Naive thymus-derived CD8-positive, alpha-beta T cell (primary cell): ENCODE measurements at regions of chr17 and their contacts with region 1.

Region 1: DNA sequence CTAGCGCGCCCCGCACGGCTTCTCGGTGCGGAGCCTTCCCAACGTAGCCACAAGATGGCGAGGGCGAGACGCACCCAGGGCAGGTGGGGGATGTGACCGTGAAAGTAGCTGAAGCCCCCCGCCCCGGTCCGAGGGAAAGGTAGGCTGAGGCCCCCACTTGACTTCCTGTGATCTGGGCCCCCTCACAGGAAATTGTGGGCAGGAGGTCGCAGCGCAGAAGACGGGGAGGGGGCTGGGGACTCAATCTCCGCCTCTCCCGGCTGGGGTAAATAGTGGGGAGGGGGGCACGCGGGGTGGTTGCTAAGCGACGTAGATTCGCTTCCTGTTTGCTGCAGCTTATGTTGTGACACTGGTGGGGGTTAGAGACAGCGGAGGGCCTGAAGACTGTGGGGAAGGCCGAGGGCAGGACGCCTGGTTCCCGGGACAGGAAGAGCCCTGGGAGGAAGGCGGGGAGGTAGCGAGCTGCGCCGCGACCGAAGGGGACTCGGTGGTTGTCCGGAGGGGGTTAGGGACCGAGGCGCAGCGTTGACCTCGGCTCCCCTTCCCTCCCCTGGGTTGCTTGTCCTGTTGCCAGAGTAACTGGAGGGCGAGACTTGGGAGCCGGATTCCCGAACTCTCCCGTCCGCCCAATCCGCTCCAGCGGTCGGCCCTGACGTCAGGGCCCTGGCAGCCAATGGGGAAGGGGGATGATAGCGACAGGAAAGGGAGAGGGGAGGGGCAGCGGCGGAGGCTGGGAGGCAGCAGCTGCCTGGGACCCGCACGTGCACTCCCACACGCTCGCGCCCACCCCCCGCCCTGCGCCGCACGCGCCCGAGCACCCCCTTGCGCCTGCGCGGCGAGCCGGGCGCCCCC is 1.2 kb downstream of the KDM6B start:
- DNase-seq: peak; percentile 77 to 97 (median 95)
- ATAC-seq: peak; percentile 54 to 64
- H3K4me3 Mint-ChIP-seq: peak overlapping the region; percentile 96 to 99 (median 98)
- H3K27ac Mint-ChIP-seq: peak overlapping the region; percentile 95 to 100 (median 100)
- H3K4me1 Mint-ChIP-seq: peaks cover 44 to 55% (median 47%) of the 10 kb centered on the region in 4 donors
- H3K27me3 Mint-ChIP-seq: peaks cover 0 to 2% (median 0%) of the 10 kb centered on the region in 5 donors

Region 2: DNA sequence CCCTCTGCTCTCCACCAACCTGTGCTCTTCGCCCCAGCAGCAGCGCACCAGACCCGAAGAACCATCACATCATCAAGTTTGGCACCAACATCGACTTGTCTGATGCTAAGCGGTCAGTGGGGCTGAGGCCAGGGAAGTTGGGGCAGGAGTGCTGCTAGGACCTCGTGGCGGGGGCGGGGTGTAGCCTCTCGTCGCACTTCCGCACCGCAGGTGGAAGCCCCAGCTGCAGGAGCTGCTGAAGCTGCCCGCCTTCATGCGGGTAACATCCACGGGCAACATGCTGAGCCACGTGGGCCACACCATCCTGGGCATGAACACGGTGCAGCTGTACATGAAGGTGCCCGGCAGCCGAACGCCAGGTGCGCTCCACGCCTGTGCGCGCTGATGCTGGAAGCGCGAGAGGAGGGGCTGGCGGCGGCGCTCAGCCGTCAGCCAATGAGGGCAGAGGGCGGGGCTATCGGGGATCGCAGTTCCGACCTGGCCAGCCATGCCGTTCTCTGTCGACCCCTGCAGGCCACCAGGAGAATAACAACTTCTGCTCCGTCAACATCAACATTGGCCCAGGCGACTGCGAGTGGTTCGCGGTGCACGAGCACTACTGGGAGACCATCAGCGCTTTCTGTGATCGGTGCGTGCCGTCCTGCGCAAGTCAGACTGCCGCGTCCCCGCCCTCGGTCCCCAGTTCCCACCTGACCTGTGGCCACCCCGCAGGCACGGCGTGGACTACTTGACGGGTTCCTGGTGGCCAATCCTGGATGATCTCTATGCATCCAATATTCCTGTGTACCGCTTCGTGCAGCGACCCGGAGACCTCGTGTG is 16.5 kb after region 1 on chr17:
- POLR2A ChIA-PET with region 1: interaction called, 116 read pairs
- DNase-seq: peak; percentile 92 to 98 (median 94)
- ATAC-seq: peak; percentile 83 to 88
- H3K4me3 Mint-ChIP-seq: peak overlapping the region; percentile 47 to 84 (median 70)
- H3K27ac Mint-ChIP-seq: peak overlapping the region; percentile 25 to 96 (median 88)
- H3K4me1 Mint-ChIP-seq: peaks cover 16 to 25% (median 21%) of the 10 kb centered on the region in 4 donors
- H3K27me3 Mint-ChIP-seq: no peaks in the 10 kb centered on the region

Region 3: GRCh38 chr17:7885367-7886226 is 50.4 kb after region 1 on chr17:
- POLR2A ChIA-PET with region 1: interaction called, 17 read pairs
- DNase-seq: peak in 6 of 10 donors; percentile 14 to 49 (median 42)
- ATAC-seq: peak in 1 of 2 donors; percentile 5
- H3K4me3 Mint-ChIP-seq: peak overlapping the region in 2 of 10 donors; percentile 43 to 76
- H3K27ac Mint-ChIP-seq: no peak overlapping the region
- H3K4me1 Mint-ChIP-seq: peaks cover 5 to 10% (median 6%) of the 10 kb centered on the region in 4 donors
- H3K27me3 Mint-ChIP-seq: no peaks in the 10 kb centered on the region

Region 4: GRCh38 chr17:7931709-7932482 is 96.7 kb after region 1 on chr17 and contains the starts of genes CNTROB and TRAPPC1:
- POLR2A ChIA-PET with region 1: interaction called, 16 read pairs
- DNase-seq: peak; percentile 97 to 100 (median 99)
- ATAC-seq: peak; percentile 96 to 97
- H3K4me3 Mint-ChIP-seq: peak within 1 kb of the TSS; percentile 87 to 100 (median 98)
- H3K27ac Mint-ChIP-seq: peak within 1 kb of the TSS; percentile 91 to 99 (median 97)
- H3K4me1 Mint-ChIP-seq: peaks cover 28 to 56% (median 51%) of the 10 kb centered on the region in 4 donors
- H3K27me3 Mint-ChIP-seq: no peaks in the 10 kb centered on the region
- polyA plus RNA-seq, gene CNTROB: 7.6 to 18.5 (median 12.4) TPM
- polyA plus RNA-seq, gene TRAPPC1: 199 to 219 (median 205) TPM